Caco-2 (cell line): ENCODE measurements at regions of chr1 and their contacts with region 1.

Region 1: GRCh38 chr1:153572569-153573015 is 6.9 kb upstream of the S100A2 start:
- DNase-seq: peak; percentile 63 to 69
- H3K4me3 ChIP-seq: no peak overlapping the region
- H3K4me3 Mint-ChIP-seq: no peak overlapping the region
- H3K27ac Mint-ChIP-seq: peak overlapping the region; percentile 29
- H3K4me1 ChIP-seq: peaks cover 58% of the 10 kb centered on the region
- H3K4me1 Mint-ChIP-seq: peaks cover 65% of the 10 kb centered on the region
- H3K27me3 ChIP-seq: no peaks in the 10 kb centered on the region
- H3K27me3 Mint-ChIP-seq: no peaks in the 10 kb centered on the region
- CTCF ChIP-seq: peak in 1 of 2 experiments; percentile 70

Region 2: DNA sequence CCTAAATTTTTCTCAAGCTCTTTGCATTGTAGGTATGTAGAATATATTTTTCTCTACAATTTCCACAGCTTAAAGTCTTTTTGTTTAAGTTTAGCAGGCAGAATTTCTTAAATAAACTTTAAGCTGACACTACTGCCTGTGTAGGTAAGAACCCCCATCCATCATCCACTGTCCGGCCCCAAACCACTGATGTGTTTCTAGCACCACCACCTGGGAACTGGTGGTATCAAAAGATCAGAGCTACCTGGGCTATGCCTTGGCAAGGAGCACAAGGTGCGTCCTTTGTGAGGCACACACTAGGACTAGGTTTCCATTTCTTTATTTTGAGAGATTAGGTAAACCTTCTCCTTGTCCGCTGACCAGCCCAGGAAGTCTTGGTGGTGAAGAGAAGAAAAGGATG is 379.9 kb before region 1 on chr1:
- CTCF ChIA-PET with region 1: no interaction called
- POLR2A ChIA-PET with region 1: no interaction called
- intact Hi-C with region 1: no loop called
- DNase-seq: peak; percentile 46 to 57
- H3K4me3 ChIP-seq: no peak overlapping the region
- H3K4me3 Mint-ChIP-seq: no peak overlapping the region
- H3K27ac Mint-ChIP-seq: no peak overlapping the region
- H3K4me1 ChIP-seq: no peaks in the 10 kb centered on the region
- H3K4me1 Mint-ChIP-seq: no peaks in the 10 kb centered on the region
- H3K27me3 ChIP-seq: no peaks in the 10 kb centered on the region; the same call in 1 of the 2 replicates
- H3K27me3 Mint-ChIP-seq: peaks cover 23% of the 10 kb centered on the region
- CTCF ChIP-seq: peak in 1 of 2 experiments; percentile 65

Region 3: DNA sequence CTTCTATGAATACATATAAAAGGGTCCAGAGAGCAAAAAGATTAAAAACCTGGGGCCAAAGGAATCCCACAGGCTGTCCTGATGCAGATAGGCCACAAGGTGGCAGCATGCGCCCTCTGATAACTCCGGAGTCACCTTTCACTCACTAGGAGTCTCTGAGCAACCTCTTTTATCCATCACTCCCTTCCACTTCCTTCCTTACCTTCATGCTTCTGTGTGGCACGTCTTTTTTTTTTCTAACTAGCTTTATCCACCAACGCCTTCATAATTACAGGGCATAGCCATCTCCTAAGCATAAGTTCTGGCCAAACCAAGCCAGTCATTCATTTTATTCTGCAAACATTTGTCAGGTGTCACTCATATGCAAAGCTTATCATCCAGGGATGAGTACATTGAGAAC is 220.1 kb before region 1 on chr1:
- CTCF ChIA-PET with region 1: no interaction called
- POLR2A ChIA-PET with region 1: no interaction called
- intact Hi-C with region 1: loop called (anchors 10 kb)
- DNase-seq: peak; percentile 60 to 72
- H3K4me3 ChIP-seq: no peak overlapping the region
- H3K4me3 Mint-ChIP-seq: no peak overlapping the region
- H3K27ac Mint-ChIP-seq: no peak overlapping the region
- H3K4me1 ChIP-seq: no peaks in the 10 kb centered on the region
- H3K4me1 Mint-ChIP-seq: no peaks in the 10 kb centered on the region
- H3K27me3 ChIP-seq: no peaks in the 10 kb centered on the region
- H3K27me3 Mint-ChIP-seq: peaks cover 15% of the 10 kb centered on the region
- CTCF ChIP-seq: peak; percentile 89 to 93

Region 4: DNA sequence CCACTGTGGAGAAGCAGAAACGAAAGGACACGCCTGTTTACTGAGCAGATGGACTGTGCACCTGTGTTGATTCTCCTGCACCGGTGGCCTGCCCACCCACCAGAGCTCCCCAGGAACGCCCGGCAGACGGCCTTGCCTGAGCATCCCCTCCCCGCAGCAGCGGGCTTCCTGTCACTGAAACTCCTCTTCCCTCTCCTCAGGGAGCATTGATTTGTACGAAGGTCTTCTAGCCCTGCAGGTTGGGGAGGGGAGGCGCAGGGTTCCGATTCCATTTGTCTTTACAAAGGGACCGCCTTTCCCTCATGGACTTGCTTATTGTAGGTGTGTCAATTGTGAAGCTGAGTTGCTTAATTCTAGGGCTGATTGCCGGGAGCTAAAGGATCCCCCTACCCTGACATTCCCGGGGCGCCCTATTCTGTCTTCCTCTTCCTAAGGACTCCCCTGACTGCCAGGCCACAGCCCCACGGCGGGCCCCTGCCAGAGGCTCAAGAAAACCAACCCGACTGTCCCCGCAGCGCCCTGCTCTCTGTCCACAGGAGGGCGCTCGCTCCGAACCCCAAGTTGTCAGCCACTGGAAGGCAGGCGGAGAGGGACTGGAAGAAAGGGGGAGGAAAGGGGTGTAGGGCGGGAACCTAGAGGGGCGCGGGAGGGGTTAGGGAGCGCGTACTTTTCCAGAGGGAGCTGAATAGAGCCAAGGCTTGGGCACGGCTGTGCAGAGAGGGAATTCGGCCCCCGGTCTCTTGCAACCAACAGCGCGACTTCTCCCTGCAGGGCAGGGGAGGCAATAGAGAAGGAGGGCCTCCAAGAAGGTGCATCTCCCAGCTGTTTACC is 39.6 kb before region 1 on chr1:
- CTCF ChIA-PET with region 1: interaction called, 13 read pairs
- POLR2A ChIA-PET with region 1: interaction called, 4 read pairs
- intact Hi-C with region 1: loop called (anchors 1 kb)
- DNase-seq: peak; percentile 77 to 84
- H3K4me3 ChIP-seq: peak overlapping the region; percentile 21
- H3K4me3 Mint-ChIP-seq: peak overlapping the region; percentile 95
- H3K27ac Mint-ChIP-seq: peak overlapping the region; percentile 72
- H3K4me1 ChIP-seq: peaks cover 37% of the 10 kb centered on the region
- H3K4me1 Mint-ChIP-seq: peaks cover 31% of the 10 kb centered on the region
- H3K27me3 ChIP-seq: no peaks in the 10 kb centered on the region
- H3K27me3 Mint-ChIP-seq: no peaks in the 10 kb centered on the region
- CTCF ChIP-seq: peak; percentile 74 to 91

Region 5: GRCh38 chr1:153545067-153546055 is 27.2 kb before region 1 on chr1 and contains the start of gene S100A4:
- CTCF ChIA-PET with region 1: interaction called, 13 read pairs
- POLR2A ChIA-PET with region 1: interaction called, 6 read pairs
- intact Hi-C with region 1: no loop called
- DNase-seq: peak; percentile 95 to 97
- H3K4me3 ChIP-seq: no peak within 1 kb of the TSS
- H3K4me3 Mint-ChIP-seq: peak within 1 kb of the TSS; percentile 71
- H3K27ac Mint-ChIP-seq: peak within 1 kb of the TSS; percentile 95
- H3K4me1 ChIP-seq: peaks cover 58% of the 10 kb centered on the region
- H3K4me1 Mint-ChIP-seq: peaks cover 51% of the 10 kb centered on the region
- H3K27me3 ChIP-seq: no peaks in the 10 kb centered on the region
- H3K27me3 Mint-ChIP-seq: no peaks in the 10 kb centered on the region
- CTCF ChIP-seq: no peak
- total RNA-seq, gene S100A4: 53.6 and 54.4 TPM in 2 replicates

Region 6: GRCh38 chr1:153617675-153618074 is 45.1 kb after region 1 on chr1:
- CTCF ChIA-PET with region 1: interaction called, 25 read pairs
- POLR2A ChIA-PET with region 1: interaction called, 25 read pairs
- intact Hi-C with region 1: loop called (anchors 1 kb)
- DNase-seq: peak; percentile 88 to 91
- H3K4me3 ChIP-seq: no peak overlapping the region
- H3K4me3 Mint-ChIP-seq: peak overlapping the region; percentile 74
- H3K27ac Mint-ChIP-seq: peak overlapping the region; percentile 96
- H3K4me1 ChIP-seq: peaks cover 34% of the 10 kb centered on the region
- H3K4me1 Mint-ChIP-seq: peaks cover 32% of the 10 kb centered on the region
- H3K27me3 ChIP-seq: no peaks in the 10 kb centered on the region
- H3K27me3 Mint-ChIP-seq: no peaks in the 10 kb centered on the region
- CTCF ChIP-seq: peak; percentile 80 to 84

Region 7: DNA sequence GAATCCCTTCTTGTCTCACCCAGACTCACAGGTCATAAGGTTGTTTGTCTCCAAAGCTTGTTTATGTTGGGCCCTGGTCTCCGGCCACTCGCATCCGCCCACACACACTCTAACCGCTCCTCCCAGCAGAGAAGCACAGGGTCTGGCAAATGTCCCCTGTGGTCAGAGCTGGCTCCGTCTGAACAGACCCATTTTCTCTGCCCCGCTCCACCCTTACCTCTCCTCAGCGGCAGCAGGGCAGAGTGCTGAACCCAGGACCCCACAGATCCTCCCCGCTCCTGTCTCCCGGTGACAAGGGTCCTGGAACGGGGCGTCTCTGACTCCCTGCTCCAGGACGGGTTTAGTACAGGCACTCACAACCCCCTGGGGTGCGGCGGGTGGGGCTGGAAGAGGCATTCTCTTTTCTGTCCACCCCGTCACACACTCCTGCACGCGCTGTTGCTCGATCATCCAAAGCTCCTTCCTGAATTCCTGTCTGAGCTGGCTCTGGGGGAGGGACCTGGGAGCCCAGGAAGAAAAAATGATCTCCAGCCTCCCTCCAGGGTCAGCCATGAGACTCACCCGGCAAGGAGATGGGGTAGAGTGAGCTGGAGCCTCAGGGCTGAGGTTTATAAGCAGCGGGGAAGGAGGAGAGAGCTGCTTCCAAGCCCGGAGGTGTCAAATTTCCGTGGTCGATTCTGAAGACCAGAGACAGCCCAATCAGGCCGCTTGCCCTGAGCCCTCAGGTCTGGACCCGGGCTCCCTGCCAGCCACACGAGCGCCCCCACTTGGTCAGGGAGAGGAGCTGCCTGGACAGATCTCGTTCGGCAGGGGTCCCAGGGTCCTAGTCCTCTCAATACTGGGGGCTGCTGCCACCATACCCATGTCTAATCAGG is 54.6 kb after region 1 on chr1 and contains the start of gene S100A13:
- CTCF ChIA-PET with region 1: interaction called, 18 read pairs
- POLR2A ChIA-PET with region 1: interaction called, 13 read pairs
- intact Hi-C with region 1: loop called (anchors 2 kb)
- DNase-seq: peak; percentile 92 to 94
- H3K4me3 ChIP-seq: peak within 1 kb of the TSS; percentile 62
- H3K4me3 Mint-ChIP-seq: peak within 1 kb of the TSS; percentile 93
- H3K27ac Mint-ChIP-seq: peak within 1 kb of the TSS; percentile 89
- H3K4me1 ChIP-seq: peaks cover 42% of the 10 kb centered on the region
- H3K4me1 Mint-ChIP-seq: peaks cover 35% of the 10 kb centered on the region
- H3K27me3 ChIP-seq: no peaks in the 10 kb centered on the region
- H3K27me3 Mint-ChIP-seq: no peaks in the 10 kb centered on the region
- CTCF ChIP-seq: peak; percentile 78 to 87
- total RNA-seq, gene S100A13: 198 and 238 TPM in 2 replicates

Region 8: GRCh38 chr1:153633716-153634665 is 61.4 kb after region 1 on chr1 and contains the start of gene CHTOP:
- CTCF ChIA-PET with region 1: interaction called, 4 read pairs
- POLR2A ChIA-PET with region 1: interaction called, 12 read pairs
- intact Hi-C with region 1: no loop called
- DNase-seq: peak; percentile 95 to 97
- H3K4me3 ChIP-seq: peak within 1 kb of the TSS; percentile 84
- H3K4me3 Mint-ChIP-seq: peak within 1 kb of the TSS; percentile 98
- H3K27ac Mint-ChIP-seq: peak within 1 kb of the TSS; percentile 99
- H3K4me1 ChIP-seq: peaks cover 26% of the 10 kb centered on the region
- H3K4me1 Mint-ChIP-seq: peaks cover 33% of the 10 kb centered on the region
- H3K27me3 ChIP-seq: no peaks in the 10 kb centered on the region
- H3K27me3 Mint-ChIP-seq: no peaks in the 10 kb centered on the region
- CTCF ChIP-seq: no peak
- total RNA-seq, gene CHTOP: 85.1 and 90.6 TPM in 2 replicates